Activated B cell treated with CpG ODN at 0.5 μM for 24 hours (primary cell): ENCODE measurements at regions of chr4 and their contacts with region 1.

Region 1: GRCh38 chr4:64539234-64539849 is 130.1 kb upstream of the TECRL start:
- DNase-seq: no peak
- ATAC-seq: peak; percentile 45
- H3K4me3 Mint-ChIP-seq: no peak overlapping the region
- H3K27ac Mint-ChIP-seq: no peak overlapping the region
- H3K4me1 Mint-ChIP-seq: no peaks in the 10 kb centered on the region
- H3K27me3 Mint-ChIP-seq: no peaks in the 10 kb centered on the region
- CTCF ChIP-seq: no peak

Region 2: DNA sequence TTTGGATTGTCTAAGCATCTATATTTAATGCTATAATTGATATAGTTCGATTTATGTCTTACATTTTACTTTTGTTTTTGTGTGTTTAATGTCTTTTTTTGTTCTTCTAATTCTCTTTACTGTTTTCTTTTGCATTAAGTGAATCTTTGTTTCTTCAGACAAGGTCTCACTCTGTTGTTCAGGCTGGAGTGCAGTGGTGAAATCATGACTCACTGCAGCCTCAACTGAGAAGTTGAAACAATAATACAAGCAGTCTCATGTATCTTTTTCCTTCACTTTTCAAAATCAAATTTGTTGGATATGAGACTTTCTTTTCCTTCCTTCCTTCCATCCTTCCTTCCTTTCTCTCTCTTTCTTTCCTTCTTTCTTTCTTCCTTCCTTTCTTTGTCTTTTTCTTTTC is 1937.6 kb before region 1 on chr4:
- CTCF ChIA-PET with region 1: no interaction called
- POLR2A ChIA-PET with region 1: no interaction called
- intact Hi-C with region 1: loop called (anchors 5 kb)
- DNase-seq: no peak
- ATAC-seq: no peak
- H3K4me3 Mint-ChIP-seq: no peak overlapping the region
- H3K27ac Mint-ChIP-seq: no peak overlapping the region
- H3K4me1 Mint-ChIP-seq: no peaks in the 10 kb centered on the region
- H3K27me3 Mint-ChIP-seq: no peaks in the 10 kb centered on the region
- CTCF ChIP-seq: no peak

Region 3: GRCh38 chr4:64271601-64272081 is 267.7 kb before region 1 on chr4:
- CTCF ChIA-PET with region 1: no interaction called
- POLR2A ChIA-PET with region 1: no interaction called
- intact Hi-C with region 1: no loop called
- DNase-seq: no peak
- ATAC-seq: no peak
- H3K4me3 Mint-ChIP-seq: no peak overlapping the region
- H3K27ac Mint-ChIP-seq: no peak overlapping the region
- H3K4me1 Mint-ChIP-seq: no peaks in the 10 kb centered on the region
- H3K27me3 Mint-ChIP-seq: no peaks in the 10 kb centered on the region
- CTCF ChIP-seq: no peak

Region 4: GRCh38 chr4:64495946-64496345 is 43.4 kb before region 1 on chr4:
- CTCF ChIA-PET with region 1: no interaction called
- POLR2A ChIA-PET with region 1: no interaction called
- intact Hi-C with region 1: no loop called
- DNase-seq: no peak
- ATAC-seq: no peak
- H3K4me3 Mint-ChIP-seq: no peak overlapping the region
- H3K27ac Mint-ChIP-seq: no peak overlapping the region
- H3K4me1 Mint-ChIP-seq: no peaks in the 10 kb centered on the region
- H3K27me3 Mint-ChIP-seq: no peaks in the 10 kb centered on the region
- CTCF ChIP-seq: no peak